ENCODE measurements at regions of chr4 and their contacts with region 1.

Region 1: GRCh38 chr4:139083956-139084803 is 68.6 kb downstream of the NOCT start:
- DNase-seq: peak; percentile 69 to 91 (median 86)
- H3K4me3 ChIP-seq: peak overlapping the region; percentile 57 to 91 (median 81)
- H3K27ac ChIP-seq: peak overlapping the region; percentile 84 to 98 (median 94)
- H3K27me3 ChIP-seq: no peaks in the 10 kb centered on the region
- CTCF ChIP-seq: peak in 36 of 56 donors; percentile 2 to 46 (median 32)

Region 2: DNA sequence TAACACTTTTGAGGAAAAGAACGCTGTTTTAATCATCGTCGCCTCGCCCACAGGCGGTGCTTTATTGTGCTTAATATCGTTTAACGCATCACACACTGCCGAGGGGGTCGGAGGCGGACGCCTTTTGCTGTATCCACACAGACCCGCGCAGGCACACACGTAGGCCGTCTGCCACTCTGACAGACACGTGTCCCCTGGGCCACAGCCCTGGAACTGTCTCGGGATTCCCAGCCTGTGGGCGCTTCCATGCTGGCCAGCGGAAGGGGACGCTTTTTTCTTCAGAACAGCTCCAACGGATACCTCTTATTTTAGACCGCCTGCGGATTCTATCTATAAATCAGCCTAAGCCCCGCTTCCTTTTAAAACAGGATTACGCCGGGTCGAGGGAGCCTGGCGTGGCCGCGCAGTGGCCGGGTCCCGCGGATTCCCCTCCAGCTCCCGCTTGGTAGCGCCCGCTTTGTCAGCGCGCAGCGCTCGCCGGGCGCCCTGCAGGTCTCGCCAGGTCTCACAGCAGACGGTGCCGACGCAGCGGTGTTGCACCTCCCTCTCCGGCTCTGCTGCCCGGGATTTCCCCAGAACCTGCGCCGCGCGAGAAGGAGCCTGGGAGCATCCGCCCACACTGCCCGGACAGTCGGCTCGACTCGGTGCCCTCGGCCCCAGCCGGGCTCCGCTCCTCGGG is 68.8 kb before region 1 on chr4 and contains the start of gene NOCT:
- intact Hi-C with region 1: loop called in 1 of 2 experiments (anchors 5 kb)
- DNase-seq: peak; percentile 73 to 89 (median 87)
- H3K4me3 ChIP-seq: peak within 1 kb of the TSS; percentile 50 to 93 (median 78)
- H3K27ac ChIP-seq: peak within 1 kb of the TSS in 58 of 59 donors; percentile 61 to 97 (median 88)
- H3K27me3 ChIP-seq: no peaks in the 10 kb centered on the region
- CTCF ChIP-seq: peak in 24 of 56 donors; percentile 2 to 53 (median 26)
- total RNA-seq, gene NOCT: 6.5 to 26.5 (median 12.5) TPM

Region 3: DNA sequence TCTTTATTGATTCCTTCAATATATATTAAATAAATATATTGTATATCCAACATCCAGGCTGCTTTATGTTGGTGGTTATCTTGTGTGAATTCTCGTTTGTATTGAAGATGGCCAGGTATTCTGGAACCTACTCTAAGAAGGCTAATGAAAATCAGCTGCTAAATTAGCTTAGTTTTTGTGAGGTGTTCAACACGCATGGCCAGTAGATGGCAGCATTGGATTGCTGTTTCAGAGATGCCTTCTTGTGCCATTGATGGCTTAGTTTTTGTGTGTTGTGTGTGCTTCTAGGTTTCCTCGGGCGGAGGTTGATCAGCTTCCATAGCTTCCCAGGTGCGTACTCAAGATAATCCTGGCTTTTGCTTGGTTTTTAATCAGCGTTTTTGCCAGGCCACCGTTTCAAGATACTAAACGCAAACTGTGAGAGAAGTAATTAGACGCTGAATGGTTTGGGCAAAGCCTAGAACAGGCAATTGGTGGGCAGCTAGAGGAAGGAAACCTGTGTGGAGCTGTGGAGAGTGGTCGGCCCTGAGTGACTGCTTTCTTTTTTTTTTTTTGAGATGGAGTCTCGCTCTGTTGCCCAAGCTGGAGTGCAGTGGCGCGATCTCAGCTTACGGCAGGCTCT is 53.5 kb before region 1 on chr4:
- intact Hi-C with region 1: loop called (anchors 5 kb)
- DNase-seq: peak; percentile 43 to 87 (median 68)
- H3K4me3 ChIP-seq: peak overlapping the region in 9 of 59 donors; percentile 8 to 31 (median 19)
- H3K27ac ChIP-seq: peak overlapping the region in 11 of 59 donors; percentile 16 to 94 (median 79)
- H3K27me3 ChIP-seq: no peaks in the 10 kb centered on the region
- CTCF ChIP-seq: peak; percentile 75 to 96 (median 85)

Region 4: DNA sequence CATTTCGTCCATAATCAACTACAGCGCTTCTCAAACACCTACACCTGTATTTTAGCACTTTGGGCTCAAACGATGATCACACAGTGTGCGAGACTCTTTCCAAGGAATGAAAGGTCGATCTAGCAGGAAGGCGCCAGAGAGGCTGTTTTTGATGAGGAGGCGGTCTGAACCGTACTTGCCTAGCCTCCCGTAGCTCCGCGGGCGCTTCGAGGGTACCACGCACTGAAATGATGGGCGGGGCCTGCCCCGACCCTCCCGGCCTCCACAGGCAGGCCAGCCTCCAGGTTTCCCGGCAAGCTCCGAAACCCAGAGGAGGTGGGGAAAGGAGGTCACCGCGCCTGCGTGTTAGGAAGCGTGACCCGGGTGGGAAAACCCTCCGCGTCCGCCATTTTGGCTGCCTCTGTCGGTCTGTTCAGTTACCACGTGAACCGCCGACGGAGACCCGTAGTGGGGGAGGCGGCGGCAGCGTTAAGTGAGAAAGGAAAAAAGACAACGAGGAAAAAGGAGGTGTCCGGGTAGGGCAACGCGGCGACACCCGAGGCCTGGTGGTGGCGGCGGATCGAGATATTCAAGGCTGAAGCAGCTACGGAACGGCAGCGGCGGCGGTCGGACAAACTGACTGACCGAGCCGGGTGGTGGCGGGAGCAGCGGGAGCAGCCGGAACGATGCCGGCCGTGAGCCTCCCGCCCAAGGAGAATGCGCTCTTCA is 217.1 kb after region 1 on chr4 and contains the start of gene NAA15:
- intact Hi-C with region 1: loop called (anchors 5 kb)
- DNase-seq: peak; percentile 95 to 98 (median 96)
- H3K4me3 ChIP-seq: peak within 1 kb of the TSS; percentile 63 to 100 (median 95)
- H3K27ac ChIP-seq: peak within 1 kb of the TSS; percentile 40 to 96 (median 90)
- H3K27me3 ChIP-seq: no peaks in the 10 kb centered on the region
- CTCF ChIP-seq: peak in 42 of 56 donors; percentile 5 to 66 (median 34)
- total RNA-seq, gene NAA15: 28.2 to 47.1 (median 37.9) TPM